GM13977 (cell line): ENCODE measurements at regions of chr9 and their contacts with region 1.

Region 1: DNA sequence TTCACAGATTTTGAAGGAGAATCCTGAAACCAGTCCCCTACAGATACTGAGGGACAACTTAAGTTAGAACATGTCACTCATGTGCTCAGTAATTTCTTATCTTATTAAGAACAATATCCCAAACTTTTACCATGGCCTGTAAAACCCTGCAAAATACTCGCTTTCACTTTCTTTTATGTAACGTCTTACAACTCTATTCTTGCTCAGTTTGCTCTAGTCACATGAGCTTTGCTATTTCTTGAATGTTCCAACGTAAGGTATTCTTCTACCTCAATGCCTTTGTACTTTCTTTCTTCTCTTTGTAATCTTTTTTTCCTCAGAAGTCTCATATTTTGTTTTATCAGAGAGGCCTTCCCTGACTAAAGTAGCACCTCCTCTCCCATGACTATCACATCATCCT is 14.1 kb downstream of the TMEM38B start:
- DNase-seq: peak; percentile 34
- CTCF ChIP-seq: no peak

Region 2: GRCh38 chr9:105447814-105448812 is 260.3 kb before region 1 on chr9 and contains the start of gene FSD1L:
- in situ Hi-C with region 1: loop called (anchors 25 kb)
- DNase-seq: peak; percentile 92
- CTCF ChIP-seq: peak; percentile 29